Activated CD4-positive, alpha-beta memory T cell treated with anti-CD3 and anti-CD28 coated beads, Interleukin-2, amount 10 ng/mL, durations not matched to agents 7 days and 5 days (primary cell): ENCODE measurements at regions of chr10 and their contacts with region 1.

Region 1: GRCh38 chr10:73785221-73785720 is at the start of gene ZSWIM8:
- DNase-seq: peak; percentile 87
- H3K4me3 Mint-ChIP-seq: peak within 1 kb of the TSS; percentile 85
- H3K27ac Mint-ChIP-seq: peak within 1 kb of the TSS; percentile 98
- H3K4me1 Mint-ChIP-seq: peaks cover 58% of the 10 kb centered on the region
- H3K27me3 Mint-ChIP-seq: no peaks in the 10 kb centered on the region
- total RNA-seq, gene ZSWIM8: 88.0 to 92.2 TPM

Region 2: GRCh38 chr10:73730153-73730906 is 54.9 kb before region 1 on chr10:
- CTCF ChIA-PET with region 1: interaction called, 3 read pairs
- POLR2A ChIA-PET with region 1: interaction called, 14 read pairs
- DNase-seq: peak; percentile 94
- H3K4me3 Mint-ChIP-seq: peak overlapping the region; percentile 92
- H3K27ac Mint-ChIP-seq: peak overlapping the region; percentile 96
- H3K4me1 Mint-ChIP-seq: peaks cover 19% of the 10 kb centered on the region
- H3K27me3 Mint-ChIP-seq: no peaks in the 10 kb centered on the region

Region 3: DNA sequence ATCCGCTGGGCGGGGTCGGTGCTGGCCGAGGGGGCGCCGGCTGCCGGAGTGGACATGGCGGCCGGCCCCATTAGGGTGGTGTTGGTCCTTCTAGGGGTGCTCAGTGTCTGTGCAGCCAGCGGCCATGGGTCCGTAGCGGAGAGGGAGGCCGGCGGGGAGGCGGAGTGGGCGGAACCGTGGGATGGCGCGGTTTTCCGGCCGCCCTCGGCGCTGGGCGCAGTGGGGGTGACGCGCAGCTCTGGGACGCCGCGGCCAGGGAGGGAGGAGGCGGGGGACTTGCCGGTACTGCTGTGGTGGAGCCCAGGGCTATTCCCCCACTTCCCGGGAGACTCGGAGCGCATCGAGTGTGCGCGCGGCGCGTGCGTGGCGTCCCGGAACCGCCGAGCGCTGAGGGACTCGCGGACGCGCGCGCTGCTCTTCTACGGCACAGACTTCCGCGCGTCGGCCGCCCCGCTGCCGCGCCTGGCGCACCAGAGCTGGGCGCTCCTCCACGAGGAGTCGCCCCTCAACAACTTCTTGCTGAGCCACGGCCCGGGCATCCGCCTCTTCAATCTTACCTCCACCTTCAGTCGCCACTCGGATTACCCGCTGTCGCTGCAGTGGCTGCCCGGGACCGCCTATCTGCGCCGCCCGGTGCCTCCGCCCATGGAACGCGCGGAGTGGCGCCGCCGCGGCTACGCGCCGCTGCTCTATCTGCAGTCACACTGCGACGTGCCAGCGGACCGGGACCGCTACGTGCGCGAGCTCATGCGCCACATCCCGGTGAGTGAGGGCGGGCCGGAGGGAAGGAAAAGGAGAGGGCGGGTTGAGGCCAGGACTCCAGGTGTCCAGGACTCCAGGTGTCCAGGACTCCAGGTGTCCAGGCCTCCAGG is 12.8 kb before region 1 on chr10:
- CTCF ChIA-PET with region 1: interaction called, 92 read pairs
- POLR2A ChIA-PET with region 1: interaction called, 98 read pairs
- DNase-seq: peak; percentile 86
- H3K4me3 Mint-ChIP-seq: peak overlapping the region; percentile 85
- H3K27ac Mint-ChIP-seq: peak overlapping the region; percentile 93
- H3K4me1 Mint-ChIP-seq: peaks cover 67% of the 10 kb centered on the region
- H3K27me3 Mint-ChIP-seq: no peaks in the 10 kb centered on the region

Region 4: GRCh38 chr10:73803680-73804286 is 18.5 kb after region 1 on chr10:
- CTCF ChIA-PET with region 1: interaction called, 3 read pairs
- POLR2A ChIA-PET with region 1: interaction called, 73 read pairs
- DNase-seq: no peak
- H3K4me3 Mint-ChIP-seq: no peak overlapping the region
- H3K27ac Mint-ChIP-seq: peak overlapping the region; percentile 68
- H3K4me1 Mint-ChIP-seq: peaks cover 45% of the 10 kb centered on the region
- H3K27me3 Mint-ChIP-seq: no peaks in the 10 kb centered on the region

Region 5: GRCh38 chr10:73810735-73811465 is 25.6 kb after region 1 on chr10:
- CTCF ChIA-PET with region 1: interaction called, 14 read pairs
- POLR2A ChIA-PET with region 1: interaction called, 73 read pairs
- DNase-seq: peak; percentile 66
- H3K4me3 Mint-ChIP-seq: peak overlapping the region; percentile 91
- H3K27ac Mint-ChIP-seq: peak overlapping the region; percentile 95
- H3K4me1 Mint-ChIP-seq: peaks cover 45% of the 10 kb centered on the region
- H3K27me3 Mint-ChIP-seq: no peaks in the 10 kb centered on the region